ENCODE measurements at regions of chr3 and their contacts with region 1.

Region 1: DNA sequence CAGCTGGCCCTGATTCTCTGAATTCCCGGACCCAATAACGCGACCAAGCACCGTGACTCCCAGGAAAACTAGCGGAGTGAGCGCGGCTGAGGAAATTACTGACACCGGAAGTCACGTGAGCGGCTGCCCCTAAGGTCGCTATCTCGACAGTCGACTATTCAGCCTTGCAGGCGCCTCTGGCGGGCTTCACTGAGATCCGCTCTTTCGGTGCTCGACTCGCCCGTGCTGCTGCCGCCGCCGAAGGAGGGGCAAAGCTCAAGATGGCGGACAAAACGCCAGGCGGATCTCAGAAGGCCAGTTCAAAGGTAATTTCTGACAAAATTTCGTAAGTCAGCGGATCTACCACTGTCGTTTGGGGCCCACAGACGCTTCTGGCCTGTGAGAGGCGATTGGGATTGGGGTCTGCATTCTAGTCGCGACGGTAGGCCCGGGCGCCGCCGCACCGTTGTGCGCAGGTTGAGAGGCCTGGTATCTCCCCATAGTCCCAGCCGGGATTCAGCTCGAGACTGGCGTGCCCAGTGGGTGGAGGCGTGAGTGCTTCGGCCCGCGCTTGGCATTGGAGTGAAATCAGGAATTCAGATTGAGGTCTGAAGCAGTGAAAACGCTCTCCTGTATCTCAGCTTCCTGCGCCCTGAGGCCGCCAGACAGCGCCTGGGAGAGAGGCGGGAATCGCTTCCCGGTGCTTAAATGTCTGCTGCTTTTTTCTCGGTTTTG is at the start of gene U2SURP:
- DNase-seq: peak; percentile 95
- H3K4me3 Mint-ChIP-seq: peak within 1 kb of the TSS; percentile 96
- H3K27ac Mint-ChIP-seq: peak within 1 kb of the TSS; percentile 96
- H3K4me1 Mint-ChIP-seq: peaks cover 31% of the 10 kb centered on the region
- H3K27me3 Mint-ChIP-seq: no peaks in the 10 kb centered on the region
- total RNA-seq, gene U2SURP: 173 to 180 TPM

Region 2: GRCh38 chr3:142148792-142149672 is 852.5 kb before region 1 on chr3 and contains the start of gene TFDP2:
- CTCF ChIA-PET with region 1: no interaction called
- intact Hi-C with region 1: loop called (anchors 5 kb)
- DNase-seq: peak; percentile 89
- H3K4me3 Mint-ChIP-seq: peak within 1 kb of the TSS; percentile 84
- H3K27ac Mint-ChIP-seq: no peak within 1 kb of the TSS
- H3K4me1 Mint-ChIP-seq: peaks cover 24% of the 10 kb centered on the region
- H3K27me3 Mint-ChIP-seq: no peaks in the 10 kb centered on the region
- total RNA-seq, gene TFDP2: 23.0 to 25.0 TPM

Region 3: GRCh38 chr3:142578327-142579223 is 423.0 kb before region 1 on chr3 and contains the start of gene ATR:
- CTCF ChIA-PET with region 1: no interaction called
- intact Hi-C with region 1: loop called (anchors 1 kb)
- DNase-seq: peak; percentile 98
- H3K4me3 Mint-ChIP-seq: peak within 1 kb of the TSS; percentile 94
- H3K27ac Mint-ChIP-seq: peak within 1 kb of the TSS; percentile 95
- H3K4me1 Mint-ChIP-seq: peaks cover 41% of the 10 kb centered on the region
- H3K27me3 Mint-ChIP-seq: no peaks in the 10 kb centered on the region
- total RNA-seq, gene ATR: 42.5 to 43.1 TPM

Region 4: GRCh38 chr3:142723968-142724681 is 277.4 kb before region 1 on chr3 and contains the start of gene TRPC1:
- CTCF ChIA-PET with region 1: no interaction called
- intact Hi-C with region 1: loop called (anchors 1 kb)
- DNase-seq: peak; percentile 57
- H3K4me3 Mint-ChIP-seq: peak within 1 kb of the TSS; percentile 83
- H3K27ac Mint-ChIP-seq: peak within 1 kb of the TSS; percentile 82
- H3K4me1 Mint-ChIP-seq: peaks cover 10% of the 10 kb centered on the region
- H3K27me3 Mint-ChIP-seq: peaks cover 20% of the 10 kb centered on the region
- total RNA-seq, gene TRPC1: 3.1 to 4.8 TPM

Region 5: DNA sequence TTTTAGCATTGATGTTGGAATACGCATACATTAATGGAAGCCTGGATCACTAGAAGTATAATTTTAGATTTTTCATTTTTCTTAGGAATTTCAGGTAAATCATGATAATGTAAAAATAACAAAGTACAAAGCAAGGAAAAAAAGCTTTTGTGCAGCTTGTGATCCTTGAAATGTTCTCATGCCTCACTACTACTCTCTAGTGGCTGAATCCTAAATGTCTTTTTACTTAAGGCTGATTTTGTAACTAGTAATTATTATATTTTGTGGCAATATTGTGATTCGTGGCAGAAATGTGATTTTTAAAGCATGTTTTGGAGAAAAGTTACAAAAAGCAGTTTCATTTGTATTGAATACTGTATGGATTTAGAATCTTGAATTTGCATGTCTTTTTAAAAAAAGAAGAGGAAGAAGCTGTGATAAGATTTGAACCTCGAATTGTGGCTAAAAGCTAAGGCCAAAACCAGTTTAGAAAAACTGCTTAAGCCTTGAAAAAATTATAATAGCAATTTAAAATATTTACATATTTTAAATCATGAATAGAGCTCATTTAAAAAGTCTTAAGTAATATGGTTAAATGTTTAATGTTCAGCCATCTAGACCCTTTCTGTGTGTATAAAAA is 38.8 kb after region 1 on chr3:
- CTCF ChIA-PET with region 1: interaction called, 3 read pairs
- intact Hi-C with region 1: loop called (anchors 5 kb)
- DNase-seq: no peak
- H3K4me3 Mint-ChIP-seq: no peak overlapping the region
- H3K27ac Mint-ChIP-seq: no peak overlapping the region
- H3K4me1 Mint-ChIP-seq: peaks cover 2% of the 10 kb centered on the region
- H3K27me3 Mint-ChIP-seq: no peaks in the 10 kb centered on the region

Region 6: GRCh38 chr3:143165211-143165610 is 163.7 kb after region 1 on chr3:
- CTCF ChIA-PET with region 1: no interaction called
- intact Hi-C with region 1: loop called (anchors 2 kb)
- DNase-seq: no peak
- H3K4me3 Mint-ChIP-seq: no peak overlapping the region
- H3K27ac Mint-ChIP-seq: peak overlapping the region; percentile 88
- H3K4me1 Mint-ChIP-seq: peaks cover 73% of the 10 kb centered on the region
- H3K27me3 Mint-ChIP-seq: no peaks in the 10 kb centered on the region

Region 7: DNA sequence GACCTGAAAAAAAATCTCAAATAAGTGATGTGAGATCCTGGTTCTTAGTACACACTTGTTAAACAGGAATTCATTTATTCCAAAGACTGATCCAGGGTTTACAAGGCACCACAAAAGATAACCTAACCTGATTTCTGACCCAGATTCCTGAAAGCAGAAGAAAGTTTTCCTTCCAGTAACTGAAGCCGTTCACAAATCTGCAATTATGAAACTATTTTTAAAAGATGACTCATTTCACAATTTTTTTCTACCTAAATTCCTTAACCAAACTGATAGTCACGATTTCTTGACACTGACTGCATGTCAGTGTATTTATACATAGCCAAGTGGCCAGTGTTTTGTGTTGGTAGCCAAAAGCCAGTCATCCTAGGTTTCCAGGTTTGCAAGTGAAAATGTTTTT is 829.7 kb after region 1 on chr3:
- CTCF ChIA-PET with region 1: no interaction called
- intact Hi-C with region 1: loop called (anchors 10 kb)
- DNase-seq: peak; percentile 17
- H3K4me3 Mint-ChIP-seq: no peak overlapping the region
- H3K27ac Mint-ChIP-seq: no peak overlapping the region
- H3K4me1 Mint-ChIP-seq: peaks cover 37% of the 10 kb centered on the region
- H3K27me3 Mint-ChIP-seq: no peaks in the 10 kb centered on the region